Mammary epithelial cell (primary cell): ENCODE measurements at regions of chr2 and their contacts with region 1.

Region 1: GRCh38 chr2:18987592-18988073 is 370.8 kb downstream of the OSR1 start:
- DNase-seq: peak; percentile 86
- H3K4me3 ChIP-seq: no peak overlapping the region
- H3K27ac ChIP-seq: no peak overlapping the region
- H3K4me1 ChIP-seq: peaks cover 28% of the 10 kb centered on the region
- H3K27me3 ChIP-seq: no peaks in the 10 kb centered on the region
- CTCF ChIP-seq: peak; percentile 24 to 32

Region 2: DNA sequence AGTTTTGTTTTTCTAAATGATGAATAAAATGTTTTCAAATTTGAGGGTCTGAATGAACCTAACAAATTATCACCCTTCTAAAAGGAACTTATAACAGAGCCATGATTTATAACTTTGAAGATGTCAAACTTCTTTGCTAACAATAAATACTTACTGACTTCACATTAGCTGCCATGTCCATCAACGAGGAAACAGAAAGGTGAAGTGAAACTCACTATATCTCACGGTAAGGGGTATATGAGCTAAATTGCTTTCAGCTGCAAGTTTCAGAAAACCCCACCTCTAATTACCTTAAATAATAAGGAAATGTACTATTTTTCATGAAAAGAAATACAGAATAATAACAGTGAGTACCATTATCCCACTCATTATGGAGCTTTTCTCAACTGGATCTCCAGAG is 47.4 kb before region 1 on chr2:
- CTCF ChIA-PET with region 1: no interaction called
- dilution Hi-C with region 1: no loop called
- in situ Hi-C with region 1: no loop called
- intact Hi-C with region 1: no loop called
- DNase-seq: no peak
- H3K4me3 ChIP-seq: no peak overlapping the region
- H3K27ac ChIP-seq: no peak overlapping the region
- H3K4me1 ChIP-seq: no peaks in the 10 kb centered on the region
- H3K27me3 ChIP-seq: no peaks in the 10 kb centered on the region
- CTCF ChIP-seq: no peak

Region 3: DNA sequence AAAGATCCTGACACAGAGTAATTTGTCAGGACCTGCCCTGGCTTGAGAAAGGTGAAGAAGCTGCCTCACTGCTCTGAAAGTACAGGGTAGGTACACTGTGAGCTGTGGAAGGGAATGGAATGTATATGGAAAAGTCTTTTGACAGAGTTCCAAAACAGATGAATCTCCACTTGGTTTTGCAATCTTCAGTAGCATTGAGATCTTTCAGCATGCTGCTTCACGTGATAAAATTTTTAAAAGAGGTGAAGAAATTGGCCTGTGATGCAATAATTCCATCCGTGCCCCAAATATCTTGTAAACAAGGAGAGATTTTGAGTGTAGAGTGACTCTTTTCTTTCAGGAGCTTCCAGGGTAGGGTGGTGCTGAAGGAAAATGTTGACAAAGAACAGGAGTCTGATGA is 247.7 kb after region 1 on chr2:
- CTCF ChIA-PET with region 1: no interaction called
- dilution Hi-C with region 1: no loop called
- in situ Hi-C with region 1: no loop called
- intact Hi-C with region 1: loop called (anchors 1 kb)
- DNase-seq: peak; percentile 90
- H3K4me3 ChIP-seq: no peak overlapping the region
- H3K27ac ChIP-seq: peak overlapping the region; percentile 68
- H3K4me1 ChIP-seq: peaks cover 26% of the 10 kb centered on the region
- H3K27me3 ChIP-seq: no peaks in the 10 kb centered on the region
- CTCF ChIP-seq: no peak

Region 4: GRCh38 chr2:19357402-19358241 is 370.0 kb after region 1 on chr2:
- CTCF ChIA-PET with region 1: no interaction called
- dilution Hi-C with region 1: no loop called
- in situ Hi-C with region 1: no loop called
- intact Hi-C with region 1: loop called (anchors 2 kb)
- DNase-seq: peak; percentile 49
- H3K4me3 ChIP-seq: peak overlapping the region; percentile 71 to 90 (median 89)
- H3K27ac ChIP-seq: peak overlapping the region; percentile 67
- H3K4me1 ChIP-seq: peaks cover 27% of the 10 kb centered on the region
- H3K27me3 ChIP-seq: no peaks in the 10 kb centered on the region
- CTCF ChIP-seq: no peak